Mammary epithelial cell (primary cell): ENCODE measurements at regions of chr17 and their contacts with region 1.

Region 1: GRCh38 chr17:8753976-8754440 is 4.3 kb downstream of the SPDYE4 start:
- DNase-seq: peak; percentile 20
- H3K4me3 ChIP-seq: no peak overlapping the region
- H3K27ac ChIP-seq: no peak overlapping the region
- H3K4me1 ChIP-seq: no peaks in the 10 kb centered on the region
- H3K27me3 ChIP-seq: no peaks in the 10 kb centered on the region
- CTCF ChIP-seq: peak; percentile 56 to 65

Region 2: DNA sequence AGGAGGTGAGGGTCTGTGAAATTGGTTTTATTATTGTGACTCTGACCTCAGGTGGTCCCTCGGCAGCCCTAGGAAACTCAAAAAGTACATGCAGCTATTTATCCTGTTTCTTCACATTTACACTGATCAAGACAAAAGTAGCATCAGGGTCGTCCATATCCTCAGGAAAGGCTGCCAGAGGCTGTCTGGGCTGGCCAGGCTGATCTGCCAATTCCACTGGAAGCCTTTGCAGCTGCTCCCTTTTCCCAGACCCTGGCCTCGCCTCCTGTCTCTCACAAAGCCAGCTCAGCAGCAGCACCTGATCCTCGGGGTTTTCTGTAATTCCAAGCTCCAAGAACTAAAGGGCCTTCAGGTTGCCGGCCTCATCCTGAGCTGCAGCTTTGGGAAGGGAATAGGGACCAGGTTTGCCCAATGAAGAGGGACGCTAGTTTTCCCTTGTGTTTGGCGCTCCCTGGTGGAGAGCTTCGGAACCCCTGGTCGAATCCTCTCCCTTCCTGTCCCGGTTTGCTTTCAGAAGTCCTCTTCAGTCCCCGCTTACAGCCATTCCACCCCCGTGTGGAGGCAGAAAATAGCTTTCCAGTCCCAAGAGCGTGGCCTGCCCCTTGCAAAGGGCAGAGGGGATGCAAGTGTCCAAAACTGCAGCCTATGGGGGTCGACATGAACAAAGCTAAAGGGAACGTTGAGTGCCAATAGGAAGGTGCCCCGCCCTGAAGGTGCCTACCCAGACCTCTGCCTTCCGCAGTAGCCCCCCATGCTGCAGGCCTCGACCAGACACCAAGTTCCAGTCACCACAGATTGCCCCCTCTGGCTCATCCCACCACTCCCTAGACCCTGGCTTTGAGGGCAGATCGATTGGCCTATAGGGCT is 31.8 kb after region 1 on chr17:
- CTCF ChIA-PET with region 1: no interaction called
- dilution Hi-C with region 1: no loop called
- in situ Hi-C with region 1: no loop called
- intact Hi-C with region 1: loop called (anchors 1 kb)
- DNase-seq: peak; percentile 45
- H3K4me3 ChIP-seq: no peak overlapping the region
- H3K27ac ChIP-seq: no peak overlapping the region
- H3K4me1 ChIP-seq: no peaks in the 10 kb centered on the region
- H3K27me3 ChIP-seq: no peaks in the 10 kb centered on the region
- CTCF ChIP-seq: peak; percentile 83 to 89